CD8-positive, alpha-beta T cell (primary cell): ENCODE measurements at regions of chr15 and their contacts with region 1.

Region 1: DNA sequence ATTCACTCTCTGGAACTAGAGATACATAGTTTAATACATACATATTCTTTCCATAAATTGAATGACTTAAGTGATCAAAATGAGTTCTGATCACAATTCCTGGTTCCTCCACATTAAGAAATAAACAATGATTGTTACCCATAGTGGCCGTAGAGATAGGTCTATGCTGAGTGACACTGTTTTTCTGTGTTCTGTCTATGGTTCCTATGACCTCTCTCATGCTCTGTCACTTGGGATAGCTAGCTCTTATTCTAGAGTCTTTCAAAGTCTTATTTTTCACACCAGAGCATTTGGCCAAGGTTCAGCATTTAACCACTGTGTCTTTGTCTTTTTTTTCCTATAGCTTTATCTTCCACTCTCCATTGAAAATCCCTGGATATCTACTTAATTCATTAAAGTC is 132.4 kb downstream of the GOLGA6L6 start:
- DNase-seq: no peak
- ATAC-seq: no peak
- H3K4me3 ChIP-seq: no peak overlapping the region
- H3K4me3 Mint-ChIP-seq: no peak overlapping the region
- H3K27ac ChIP-seq: no peak overlapping the region
- H3K27ac Mint-ChIP-seq: no peak overlapping the region
- H3K4me1 ChIP-seq: no peaks in the 10 kb centered on the region
- H3K4me1 Mint-ChIP-seq: no peaks in the 10 kb centered on the region
- H3K27me3 ChIP-seq: no peaks in the 10 kb centered on the region
- H3K27me3 Mint-ChIP-seq: peaks cover 2% of the 10 kb centered on the region
- CTCF ChIP-seq: no peak

Region 2: GRCh38 chr15:20340331-20340811 is 68.9 kb before region 1 on chr15:
- CTCF ChIA-PET with region 1: no interaction called
- POLR2A ChIA-PET with region 1: no interaction called
- intact Hi-C with region 1: no loop called
- DNase-seq: peak in 6 of 9 experiments; percentile 20 to 68 (median 36)
- ATAC-seq: no peak
- H3K4me3 ChIP-seq: no peak overlapping the region
- H3K4me3 Mint-ChIP-seq: no peak overlapping the region
- H3K27ac ChIP-seq: no peak overlapping the region
- H3K27ac Mint-ChIP-seq: no peak overlapping the region
- H3K4me1 ChIP-seq: no peaks in the 10 kb centered on the region
- H3K4me1 Mint-ChIP-seq: no peaks in the 10 kb centered on the region
- H3K27me3 ChIP-seq: peaks cover 0 to 14% of the 10 kb centered on the region in 2 experiments
- H3K27me3 Mint-ChIP-seq: no peaks in the 10 kb centered on the region
- CTCF ChIP-seq: no peak

Region 3: GRCh38 chr15:20376872-20377271 is 32.4 kb before region 1 on chr15:
- CTCF ChIA-PET with region 1: no interaction called
- POLR2A ChIA-PET with region 1: no interaction called
- intact Hi-C with region 1: no loop called
- DNase-seq: no peak
- ATAC-seq: no peak
- H3K4me3 ChIP-seq: no peak overlapping the region
- H3K4me3 Mint-ChIP-seq: no peak overlapping the region
- H3K27ac ChIP-seq: no peak overlapping the region
- H3K27ac Mint-ChIP-seq: no peak overlapping the region
- H3K4me1 ChIP-seq: no peaks in the 10 kb centered on the region
- H3K4me1 Mint-ChIP-seq: no peaks in the 10 kb centered on the region
- H3K27me3 ChIP-seq: peaks cover 0 to 7% of the 10 kb centered on the region in 2 experiments
- H3K27me3 Mint-ChIP-seq: no peaks in the 10 kb centered on the region
- CTCF ChIP-seq: no peak

Region 4: GRCh38 chr15:22262613-22263020 is 1853.4 kb after region 1 on chr15:
- CTCF ChIA-PET with region 1: no interaction called
- POLR2A ChIA-PET with region 1: no interaction called
- intact Hi-C with region 1: loop called in 1 of 2 experiments (anchors 5 kb)
- DNase-seq: peak in 8 of 9 experiments; percentile 28 to 71 (median 48)
- ATAC-seq: peak; percentile 47
- H3K4me3 ChIP-seq: peak overlapping the region in 1 of 2 experiments; percentile 11
- H3K4me3 Mint-ChIP-seq: no peak overlapping the region
- H3K27ac ChIP-seq: peak overlapping the region in 1 of 2 experiments; percentile 53
- H3K27ac Mint-ChIP-seq: no peak overlapping the region
- H3K4me1 ChIP-seq: peaks cover 44% of the 10 kb centered on the region
- H3K4me1 Mint-ChIP-seq: peaks cover 19% of the 10 kb centered on the region
- H3K27me3 ChIP-seq: peaks cover 2 to 5% of the 10 kb centered on the region in 2 experiments
- H3K27me3 Mint-ChIP-seq: peaks cover 2% of the 10 kb centered on the region
- CTCF ChIP-seq: no peak